OCI-LY7 (cell line): ENCODE measurements at regions of chr11 and their contacts with region 1.

Region 1: DNA sequence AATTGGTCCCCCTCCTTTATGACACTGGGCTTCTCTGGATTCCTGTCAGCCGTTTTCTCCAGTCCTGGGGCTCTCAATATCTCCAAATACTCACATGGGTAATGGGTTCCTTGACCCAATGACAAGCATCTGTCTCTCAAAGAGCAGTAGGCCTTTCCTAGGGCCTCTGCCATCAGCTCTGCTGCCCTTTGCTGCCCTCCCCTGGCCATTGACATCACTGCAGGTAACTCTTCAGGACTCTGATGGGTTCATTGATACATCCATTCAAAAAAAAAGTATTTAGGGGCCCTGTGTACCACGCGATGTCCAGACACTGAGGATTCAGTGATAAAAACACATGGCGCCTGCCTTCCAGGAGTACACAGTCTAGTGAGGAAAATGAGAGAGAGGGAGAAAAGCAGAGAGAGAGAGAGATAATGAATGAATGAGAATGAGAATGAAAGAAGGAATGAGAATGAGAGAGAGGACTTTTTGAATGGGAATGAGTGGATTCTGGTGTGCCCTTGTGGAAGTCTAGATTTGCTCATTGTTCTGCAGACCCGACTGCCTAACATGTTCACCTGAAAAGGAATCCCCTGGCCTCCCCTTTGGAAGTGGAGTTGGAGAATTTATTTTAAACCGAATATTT is 42.6 kb upstream of the OLFML1 start:
- DNase-seq: peak; percentile 78
- H3K4me3 ChIP-seq: no peak overlapping the region
- H3K27ac ChIP-seq: no peak overlapping the region
- H3K4me1 ChIP-seq: peaks cover 4% of the 10 kb centered on the region
- CTCF ChIP-seq: peak; percentile 97

Region 2: DNA sequence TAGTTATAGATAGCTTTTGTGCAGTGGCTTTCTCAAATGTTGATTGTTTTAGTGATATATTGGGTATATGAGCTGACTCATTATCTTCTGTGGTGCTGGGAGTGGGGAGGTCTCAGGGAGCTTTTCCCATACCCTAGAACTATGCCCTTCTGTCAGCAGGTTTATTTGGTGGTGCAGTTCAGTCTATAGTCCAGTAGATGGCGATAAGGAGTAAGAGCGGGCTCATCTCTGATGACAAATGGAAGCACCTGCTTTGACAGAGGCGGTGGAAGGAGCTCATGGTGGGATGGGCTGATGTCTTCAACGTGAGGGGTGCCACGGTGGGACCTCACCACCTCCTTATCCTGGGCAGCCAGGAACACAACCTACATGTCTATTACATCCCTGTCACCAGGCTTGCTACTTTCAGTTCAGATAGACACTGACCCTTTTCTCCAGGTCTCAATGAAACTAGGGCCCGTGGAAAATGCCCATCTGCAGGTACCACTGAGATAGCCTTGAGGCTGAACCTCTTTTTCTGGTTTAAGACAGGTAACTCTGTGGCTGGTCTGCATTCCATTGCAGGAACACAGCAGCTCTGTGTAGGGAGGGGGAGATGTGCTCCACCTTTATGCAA is 630.2 kb before region 1 on chr11:
- CTCF ChIA-PET with region 1: no interaction called
- POLR2A ChIA-PET with region 1: interaction called, 3 read pairs
- intact Hi-C with region 1: loop called (anchors 5 kb)
- DNase-seq: peak; percentile 61
- H3K4me3 ChIP-seq: no peak overlapping the region
- H3K27ac ChIP-seq: no peak overlapping the region
- H3K4me1 ChIP-seq: no peaks in the 10 kb centered on the region
- CTCF ChIP-seq: peak; percentile 95

Region 3: GRCh38 chr11:7098235-7098832 is 344.4 kb before region 1 on chr11:
- CTCF ChIA-PET with region 1: interaction called, 3 read pairs
- POLR2A ChIA-PET with region 1: interaction called, 3 read pairs
- intact Hi-C with region 1: loop called (anchors 2 kb)
- DNase-seq: peak; percentile 76
- H3K4me3 ChIP-seq: no peak overlapping the region
- H3K27ac ChIP-seq: no peak overlapping the region
- H3K4me1 ChIP-seq: no peaks in the 10 kb centered on the region
- CTCF ChIP-seq: peak; percentile 88

Region 4: DNA sequence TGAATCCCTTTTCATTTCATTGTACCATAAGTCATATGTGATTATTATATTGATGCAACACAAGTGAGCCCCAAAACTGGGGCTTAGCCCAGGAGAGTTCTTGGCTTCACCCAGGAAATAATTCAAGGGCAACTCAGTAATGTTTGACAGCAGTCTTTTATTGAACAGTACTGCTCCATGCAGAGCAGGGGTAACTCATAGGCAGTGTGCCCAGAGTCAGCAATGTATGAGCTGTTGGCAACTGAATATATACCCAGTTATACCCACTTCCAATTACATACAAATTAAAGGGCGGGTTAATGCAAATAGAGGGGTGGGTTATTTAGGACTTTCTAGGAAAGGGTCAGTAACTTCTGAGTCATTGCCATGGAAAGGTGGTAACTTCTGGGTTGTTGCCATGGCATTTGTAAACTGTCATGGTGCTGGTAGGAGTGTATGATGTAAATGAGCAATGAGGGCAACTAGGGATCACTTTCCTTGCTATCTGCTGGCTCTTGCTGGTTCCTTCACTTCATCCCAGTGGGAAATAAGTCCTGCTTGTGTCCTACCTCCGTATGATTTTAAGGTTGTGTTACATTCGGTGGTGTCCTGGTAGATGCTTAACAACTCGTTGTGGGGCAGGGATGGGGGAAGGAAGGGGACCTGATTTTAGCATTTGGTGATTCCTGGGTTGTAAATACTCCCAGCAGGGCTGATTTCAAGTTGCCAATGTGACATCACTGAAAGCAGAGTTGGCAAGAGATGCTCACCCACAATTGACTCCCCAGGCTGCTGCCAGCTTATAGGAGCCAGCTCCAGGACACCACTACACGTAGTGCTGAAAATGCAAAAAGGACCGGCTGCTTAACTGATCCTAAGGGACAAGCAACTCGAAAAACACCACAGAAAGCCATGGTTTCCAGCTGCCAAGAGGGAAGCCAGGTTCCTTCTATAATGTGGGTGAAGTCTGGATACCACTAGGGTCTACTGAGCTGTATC is 120.9 kb before region 1 on chr11:
- CTCF ChIA-PET with region 1: no interaction called
- POLR2A ChIA-PET with region 1: no interaction called
- intact Hi-C with region 1: no loop called
- DNase-seq: no peak
- H3K4me3 ChIP-seq: no peak overlapping the region
- H3K27ac ChIP-seq: no peak overlapping the region
- H3K4me1 ChIP-seq: no peaks in the 10 kb centered on the region
- CTCF ChIP-seq: no peak

Region 5: GRCh38 chr11:7353100-7353499 is 89.6 kb before region 1 on chr11:
- CTCF ChIA-PET with region 1: interaction called, 13 read pairs
- POLR2A ChIA-PET with region 1: interaction called, 6 read pairs
- intact Hi-C with region 1: loop called (anchors 1 kb)
- DNase-seq: peak; percentile 68
- H3K4me3 ChIP-seq: no peak overlapping the region
- H3K27ac ChIP-seq: no peak overlapping the region
- H3K4me1 ChIP-seq: no peaks in the 10 kb centered on the region
- CTCF ChIP-seq: peak; percentile 88

Region 6: GRCh38 chr11:7665473-7666291 is 223.0 kb after region 1 on chr11:
- CTCF ChIA-PET with region 1: no interaction called
- POLR2A ChIA-PET with region 1: no interaction called
- intact Hi-C with region 1: loop called (anchors 5 kb)
- DNase-seq: peak; percentile 83
- H3K4me3 ChIP-seq: no peak overlapping the region
- H3K27ac ChIP-seq: no peak overlapping the region
- H3K4me1 ChIP-seq: no peaks in the 10 kb centered on the region
- CTCF ChIP-seq: peak; percentile 90

Region 7: GRCh38 chr11:7688238-7688826 is 245.6 kb after region 1 on chr11:
- CTCF ChIA-PET with region 1: no interaction called
- POLR2A ChIA-PET with region 1: no interaction called
- intact Hi-C with region 1: loop called (anchors 5 kb)
- DNase-seq: peak; percentile 60
- H3K4me3 ChIP-seq: no peak overlapping the region
- H3K27ac ChIP-seq: no peak overlapping the region
- H3K4me1 ChIP-seq: no peaks in the 10 kb centered on the region
- CTCF ChIP-seq: peak; percentile 94